ENCODE measurements at regions of chr10 and their contacts with region 1.

Region 1: GRCh38 chr10:63268798-63269503 is 135.8 kb downstream of the NRBF2 start:
- DNase-seq: peak; percentile 55 to 95 (median 89)
- ATAC-seq: peak; percentile 95
- H3K4me3 ChIP-seq: peak overlapping the region; percentile 60
- H3K4me3 Mint-ChIP-seq: peak overlapping the region; percentile 93 to 99 (median 98)
- H3K27ac ChIP-seq: peak overlapping the region; percentile 91
- H3K27ac Mint-ChIP-seq: peak overlapping the region; percentile 97 to 100 (median 99)
- H3K4me1 ChIP-seq: peaks cover 9 to 19% of the 10 kb centered on the region in 2 donors
- H3K4me1 Mint-ChIP-seq: peaks cover 9 to 33% (median 19%) of the 10 kb centered on the region in 7 donors
- H3K27me3 ChIP-seq: no peaks in the 10 kb centered on the region
- H3K27me3 Mint-ChIP-seq: no peaks in the 10 kb centered on the region

Region 2: GRCh38 chr10:61903221-61903927 is 1365.6 kb before region 1 on chr10:
- CTCF ChIA-PET with region 1: no interaction called
- POLR2A ChIA-PET with region 1: no interaction called
- intact Hi-C with region 1: loop called (anchors 2 to 5 kb)
- DNase-seq: peak; percentile 56 to 78 (median 69)
- ATAC-seq: peak; percentile 58
- H3K4me3 ChIP-seq: peak overlapping the region; percentile 96
- H3K4me3 Mint-ChIP-seq: peak overlapping the region; percentile 81 to 100 (median 94)
- H3K27ac ChIP-seq: peak overlapping the region; percentile 92
- H3K27ac Mint-ChIP-seq: peak overlapping the region; percentile 93 to 100 (median 97)
- H3K4me1 ChIP-seq: peaks cover 18 to 25% of the 10 kb centered on the region in 2 donors
- H3K4me1 Mint-ChIP-seq: peaks cover 14 to 59% (median 49%) of the 10 kb centered on the region in 7 donors
- H3K27me3 ChIP-seq: no peaks in the 10 kb centered on the region
- H3K27me3 Mint-ChIP-seq: peaks cover 0 to 2% (median 0%) of the 10 kb centered on the region in 5 donors

Region 3: GRCh38 chr10:62443866-62444265 is 825.1 kb before region 1 on chr10:
- CTCF ChIA-PET with region 1: no interaction called
- POLR2A ChIA-PET with region 1: no interaction called
- intact Hi-C with region 1: no loop called
- DNase-seq: no peak
- ATAC-seq: no peak
- H3K4me3 ChIP-seq: no peak overlapping the region
- H3K4me3 Mint-ChIP-seq: no peak overlapping the region
- H3K27ac ChIP-seq: no peak overlapping the region
- H3K27ac Mint-ChIP-seq: no peak overlapping the region
- H3K4me1 ChIP-seq: no peaks in the 10 kb centered on the region
- H3K4me1 Mint-ChIP-seq: peaks cover 0 to 3% (median 0%) of the 10 kb centered on the region in 7 donors
- H3K27me3 ChIP-seq: no peaks in the 10 kb centered on the region
- H3K27me3 Mint-ChIP-seq: peaks cover 3 to 24% (median 11%) of the 10 kb centered on the region in 5 donors

Region 4: DNA sequence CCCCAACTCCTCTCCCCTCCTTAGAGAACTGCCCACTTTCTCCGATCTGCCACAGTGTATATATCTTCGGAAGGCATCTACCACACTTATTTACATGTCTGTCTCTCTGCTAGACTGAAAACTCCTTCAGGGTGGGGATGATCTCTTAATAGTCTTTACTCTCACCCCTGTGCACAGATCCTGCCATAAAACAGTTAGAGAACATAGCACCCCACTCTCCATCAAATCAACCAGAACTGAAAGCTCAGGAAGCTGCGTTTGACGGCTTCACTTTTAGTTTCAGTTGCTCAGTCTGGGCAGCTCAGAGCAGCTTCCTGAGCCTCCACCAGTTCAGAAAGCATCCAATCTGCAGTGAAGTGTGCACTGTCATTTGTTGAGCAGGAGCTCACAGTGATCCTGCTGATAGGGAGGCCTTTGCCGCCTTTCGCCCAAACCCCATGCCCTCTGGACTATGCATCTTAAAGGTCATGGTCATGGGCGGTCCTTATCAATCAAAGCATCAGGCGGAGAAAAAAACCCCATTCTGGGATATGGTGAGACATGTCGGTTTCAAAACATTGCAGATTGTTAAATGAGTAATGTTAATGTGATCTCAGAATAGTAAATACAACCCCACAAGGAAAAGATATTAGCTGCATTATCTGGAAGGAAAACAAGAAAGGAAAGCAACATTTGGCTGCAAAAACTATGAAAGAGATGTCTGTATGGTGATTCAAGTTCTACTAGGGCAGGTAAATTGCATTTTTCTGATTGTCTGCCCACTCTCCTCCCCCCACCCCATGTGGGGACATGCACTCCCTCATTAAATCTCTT is 631.5 kb before region 1 on chr10:
- CTCF ChIA-PET with region 1: no interaction called
- POLR2A ChIA-PET with region 1: no interaction called
- intact Hi-C with region 1: loop called (anchors 10 kb)
- DNase-seq: peak; percentile 32 to 82 (median 75)
- ATAC-seq: peak; percentile 86
- H3K4me3 ChIP-seq: peak overlapping the region; percentile 67
- H3K4me3 Mint-ChIP-seq: no peak overlapping the region
- H3K27ac ChIP-seq: peak overlapping the region; percentile 70
- H3K27ac Mint-ChIP-seq: no peak overlapping the region
- H3K4me1 ChIP-seq: peaks cover 18 to 41% of the 10 kb centered on the region in 2 donors
- H3K4me1 Mint-ChIP-seq: peaks cover 2 to 38% (median 6%) of the 10 kb centered on the region in 7 donors
- H3K27me3 ChIP-seq: no peaks in the 10 kb centered on the region
- H3K27me3 Mint-ChIP-seq: no peaks in the 10 kb centered on the region

Region 5: GRCh38 chr10:63173468-63174232 is 95.3 kb before region 1 on chr10:
- CTCF ChIA-PET with region 1: no interaction called
- POLR2A ChIA-PET with region 1: no interaction called
- intact Hi-C with region 1: loop called in 1 of 2 experiments (anchors 2 kb)
- DNase-seq: no peak
- ATAC-seq: peak; percentile 72
- H3K4me3 ChIP-seq: no peak overlapping the region
- H3K4me3 Mint-ChIP-seq: peak overlapping the region in 2 of 10 donors; percentile 45 to 56
- H3K27ac ChIP-seq: no peak overlapping the region
- H3K27ac Mint-ChIP-seq: peak overlapping the region; percentile 32 to 88 (median 75)
- H3K4me1 ChIP-seq: no peaks in the 10 kb centered on the region
- H3K4me1 Mint-ChIP-seq: peaks cover 4 to 69% (median 25%) of the 10 kb centered on the region in 7 donors
- H3K27me3 ChIP-seq: no peaks in the 10 kb centered on the region
- H3K27me3 Mint-ChIP-seq: no peaks in the 10 kb centered on the region

Region 6: GRCh38 chr10:63241841-63242281 is 27.1 kb before region 1 on chr10:
- CTCF ChIA-PET with region 1: interaction called, 4 read pairs
- POLR2A ChIA-PET with region 1: interaction called, 3 read pairs
- intact Hi-C with region 1: loop called in 1 of 2 experiments (anchors 1 kb)
- DNase-seq: peak in 5 of 9 donors; percentile 27 to 41 (median 30)
- ATAC-seq: peak; percentile 45
- H3K4me3 ChIP-seq: peak overlapping the region; percentile 20
- H3K4me3 Mint-ChIP-seq: peak overlapping the region; percentile 25 to 84 (median 77)
- H3K27ac ChIP-seq: peak overlapping the region; percentile 46
- H3K27ac Mint-ChIP-seq: peak overlapping the region; percentile 68 to 89 (median 81)
- H3K4me1 ChIP-seq: peaks cover 43 to 44% of the 10 kb centered on the region in 2 donors
- H3K4me1 Mint-ChIP-seq: peaks cover 54 to 95% (median 79%) of the 10 kb centered on the region in 7 donors
- H3K27me3 ChIP-seq: no peaks in the 10 kb centered on the region
- H3K27me3 Mint-ChIP-seq: no peaks in the 10 kb centered on the region

Region 7: DNA sequence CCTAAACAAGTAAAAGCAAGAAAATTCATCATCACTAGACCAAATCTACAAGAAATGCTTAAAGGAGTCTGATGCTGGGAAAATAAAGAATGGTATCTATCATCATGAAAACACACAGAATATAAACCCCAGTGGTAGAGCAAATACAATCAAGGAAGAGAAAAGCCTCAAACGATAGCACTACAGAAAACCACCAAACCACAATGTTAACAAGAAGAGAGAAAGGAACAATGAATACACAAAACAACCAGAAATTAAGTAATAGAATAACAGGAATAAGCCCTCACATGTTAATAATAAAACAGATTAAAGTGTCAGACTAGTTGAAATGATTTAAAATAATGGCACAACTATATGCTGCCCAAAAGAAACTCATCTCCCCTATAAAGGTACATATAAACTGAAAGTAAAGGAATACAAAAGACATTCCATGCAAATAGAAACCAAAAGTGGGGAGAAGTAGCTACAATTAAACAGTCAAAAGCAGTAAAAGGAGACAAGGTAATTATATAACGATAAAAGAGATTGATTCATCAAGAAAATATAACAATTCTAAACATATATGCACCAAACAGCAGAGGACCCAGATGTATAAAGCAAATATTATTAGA is 119.6 kb after region 1 on chr10:
- CTCF ChIA-PET with region 1: no interaction called
- POLR2A ChIA-PET with region 1: interaction called, 3 read pairs
- intact Hi-C with region 1: loop called (anchors 2 kb)
- DNase-seq: peak in 6 of 9 donors; percentile 20 to 60 (median 47)
- ATAC-seq: peak; percentile 77
- H3K4me3 ChIP-seq: peak overlapping the region; percentile 36
- H3K4me3 Mint-ChIP-seq: peak overlapping the region; percentile 42 to 81 (median 72)
- H3K27ac ChIP-seq: peak overlapping the region; percentile 5
- H3K27ac Mint-ChIP-seq: peak overlapping the region; percentile 21 to 76 (median 49)
- H3K4me1 ChIP-seq: peaks cover 12 to 21% of the 10 kb centered on the region in 2 donors
- H3K4me1 Mint-ChIP-seq: peaks cover 45 to 79% (median 69%) of the 10 kb centered on the region in 7 donors
- H3K27me3 ChIP-seq: no peaks in the 10 kb centered on the region
- H3K27me3 Mint-ChIP-seq: no peaks in the 10 kb centered on the region

Region 8: DNA sequence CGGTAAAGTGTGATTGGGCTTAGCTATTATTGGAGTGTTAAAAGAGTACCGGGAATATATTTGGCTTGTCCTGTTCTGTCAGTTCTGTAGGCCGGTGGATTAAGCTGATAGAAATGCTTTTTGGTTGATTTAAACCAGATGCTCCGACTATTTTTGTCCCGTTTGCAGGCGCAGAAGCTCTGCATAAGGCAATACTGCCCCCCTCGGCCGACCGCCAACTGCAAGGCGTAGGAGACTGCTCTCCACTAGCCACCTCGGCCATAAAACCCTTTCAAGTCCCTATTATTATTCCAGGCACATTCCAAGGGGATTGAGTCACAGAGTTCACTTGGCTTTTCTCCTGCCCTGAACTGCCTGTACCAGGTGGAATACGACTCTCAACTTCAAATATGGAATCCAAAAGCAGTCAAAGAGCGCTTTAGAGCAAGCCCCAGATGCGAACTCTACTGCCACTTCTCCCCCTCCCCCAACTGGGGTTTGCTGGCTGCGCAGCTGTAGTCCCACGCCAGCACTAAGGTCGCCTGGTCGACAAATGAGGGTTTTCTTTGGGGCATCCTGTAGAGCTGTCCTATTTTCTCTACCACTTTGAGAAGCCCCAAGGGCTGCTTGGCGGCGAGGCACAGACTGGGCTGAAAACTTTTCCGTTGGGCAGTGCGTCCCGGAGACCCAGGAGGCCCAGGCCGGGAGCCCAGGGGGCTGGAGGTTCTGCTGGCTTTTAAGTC is 360.6 kb after region 1 on chr10:
- CTCF ChIA-PET with region 1: interaction called, 5 read pairs
- POLR2A ChIA-PET with region 1: interaction called, 8 read pairs
- intact Hi-C with region 1: loop called (anchors 1 kb)
- DNase-seq: peak; percentile 61 to 81 (median 78)
- ATAC-seq: peak; percentile 81
- H3K4me3 ChIP-seq: peak overlapping the region; percentile 90
- H3K4me3 Mint-ChIP-seq: peak overlapping the region; percentile 87 to 98 (median 95)
- H3K27ac ChIP-seq: peak overlapping the region; percentile 69
- H3K27ac Mint-ChIP-seq: peak overlapping the region; percentile 79 to 95 (median 90)
- H3K4me1 ChIP-seq: peaks cover 0 to 17% of the 10 kb centered on the region in 2 donors
- H3K4me1 Mint-ChIP-seq: peaks cover 19 to 40% (median 26%) of the 10 kb centered on the region in 7 donors
- H3K27me3 ChIP-seq: no peaks in the 10 kb centered on the region
- H3K27me3 Mint-ChIP-seq: peaks cover 0 to 3% (median 0%) of the 10 kb centered on the region in 5 donors

Measured in naive thymus-derived CD4-positive, alpha-beta T cell (primary cell).